Caco-2 (cell line): ENCODE measurements at regions of chr2 and their contacts with region 1.

Region 1: GRCh38 chr2:215920244-215921100 is 92.9 kb downstream of the MREG start:
- DNase-seq: peak; percentile 71 to 83
- H3K4me3 ChIP-seq: no peak overlapping the region
- H3K4me3 Mint-ChIP-seq: no peak overlapping the region
- H3K27ac Mint-ChIP-seq: peak overlapping the region; percentile 45
- H3K4me1 ChIP-seq: peaks cover 23% of the 10 kb centered on the region
- H3K4me1 Mint-ChIP-seq: peaks cover 34% of the 10 kb centered on the region
- H3K27me3 ChIP-seq: no peaks in the 10 kb centered on the region
- H3K27me3 Mint-ChIP-seq: no peaks in the 10 kb centered on the region
- CTCF ChIP-seq: peak; percentile 88 to 91

Region 2: GRCh38 chr2:215418064-215418963 is 502.2 kb before region 1 on chr2:
- CTCF ChIA-PET with region 1: no interaction called
- POLR2A ChIA-PET with region 1: no interaction called
- intact Hi-C with region 1: loop called (anchors 1 kb)
- DNase-seq: no peak
- H3K4me3 ChIP-seq: no peak overlapping the region
- H3K4me3 Mint-ChIP-seq: no peak overlapping the region
- H3K27ac Mint-ChIP-seq: peak overlapping the region; percentile 82
- H3K4me1 ChIP-seq: peaks cover 91% of the 10 kb centered on the region
- H3K4me1 Mint-ChIP-seq: peaks cover 49% of the 10 kb centered on the region
- H3K27me3 ChIP-seq: no peaks in the 10 kb centered on the region
- H3K27me3 Mint-ChIP-seq: no peaks in the 10 kb centered on the region
- CTCF ChIP-seq: no peak

Region 3: GRCh38 chr2:215454519-215455246 is 465.8 kb before region 1 on chr2:
- CTCF ChIA-PET with region 1: no interaction called
- POLR2A ChIA-PET with region 1: no interaction called
- intact Hi-C with region 1: loop called (anchors 1 kb)
- DNase-seq: peak in 1 of 2 experiments; percentile 52
- H3K4me3 ChIP-seq: no peak overlapping the region
- H3K4me3 Mint-ChIP-seq: no peak overlapping the region
- H3K27ac Mint-ChIP-seq: no peak overlapping the region
- H3K4me1 ChIP-seq: peaks cover 9% of the 10 kb centered on the region; the same call in 1 of the 2 replicates
- H3K4me1 Mint-ChIP-seq: peaks cover 7% of the 10 kb centered on the region
- H3K27me3 ChIP-seq: no peaks in the 10 kb centered on the region
- H3K27me3 Mint-ChIP-seq: no peaks in the 10 kb centered on the region
- CTCF ChIP-seq: peak; percentile 65 to 73

Region 4: DNA sequence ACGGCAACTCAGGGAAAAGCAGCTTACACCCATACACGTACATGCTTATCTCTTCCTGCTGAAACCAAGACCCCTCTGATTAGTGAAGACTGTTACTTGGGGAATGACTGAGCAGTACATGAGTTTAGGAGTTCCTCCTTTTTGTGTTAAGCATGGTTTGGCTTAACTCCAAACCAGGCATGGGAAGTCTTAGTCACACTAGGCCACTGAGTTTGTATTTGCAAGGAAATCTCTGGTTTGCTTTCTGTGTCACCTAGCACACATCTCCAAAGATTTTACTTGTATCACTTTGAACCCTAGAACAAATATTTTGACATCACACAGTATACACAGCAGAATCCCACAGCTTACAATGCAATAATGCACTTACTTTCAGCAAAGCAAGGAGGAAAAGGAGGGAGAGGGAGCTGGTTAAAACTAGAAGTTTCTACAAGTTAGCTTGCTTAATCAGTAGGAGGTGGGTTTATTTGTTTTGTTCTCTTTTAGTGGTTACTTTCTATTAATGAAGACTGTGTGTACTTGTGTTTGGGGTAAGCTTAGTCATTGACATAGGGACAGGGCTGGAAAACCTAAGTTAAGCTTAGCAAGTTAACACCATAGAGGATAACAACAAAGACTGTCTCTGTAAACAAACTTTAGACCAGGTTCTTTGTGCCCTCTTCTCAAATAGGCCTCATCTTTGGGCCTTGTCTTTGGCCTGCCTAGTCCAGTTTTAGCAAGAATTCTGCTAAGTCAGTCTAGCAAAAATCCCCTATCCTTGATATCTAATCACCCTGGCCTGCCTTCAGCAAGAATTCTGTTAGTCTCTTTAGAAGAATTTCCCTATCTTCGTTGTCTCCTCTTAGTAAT is 126.5 kb before region 1 on chr2:
- CTCF ChIA-PET with region 1: interaction called, 3 read pairs
- POLR2A ChIA-PET with region 1: no interaction called
- intact Hi-C with region 1: loop called (anchors 1 kb)
- DNase-seq: peak in 1 of 2 experiments; percentile 62
- H3K4me3 ChIP-seq: no peak overlapping the region
- H3K4me3 Mint-ChIP-seq: no peak overlapping the region
- H3K27ac Mint-ChIP-seq: peak overlapping the region; percentile 81
- H3K4me1 ChIP-seq: peaks cover 41% of the 10 kb centered on the region
- H3K4me1 Mint-ChIP-seq: peaks cover 48% of the 10 kb centered on the region
- H3K27me3 ChIP-seq: no peaks in the 10 kb centered on the region
- H3K27me3 Mint-ChIP-seq: no peaks in the 10 kb centered on the region
- CTCF ChIP-seq: no peak

Region 5: DNA sequence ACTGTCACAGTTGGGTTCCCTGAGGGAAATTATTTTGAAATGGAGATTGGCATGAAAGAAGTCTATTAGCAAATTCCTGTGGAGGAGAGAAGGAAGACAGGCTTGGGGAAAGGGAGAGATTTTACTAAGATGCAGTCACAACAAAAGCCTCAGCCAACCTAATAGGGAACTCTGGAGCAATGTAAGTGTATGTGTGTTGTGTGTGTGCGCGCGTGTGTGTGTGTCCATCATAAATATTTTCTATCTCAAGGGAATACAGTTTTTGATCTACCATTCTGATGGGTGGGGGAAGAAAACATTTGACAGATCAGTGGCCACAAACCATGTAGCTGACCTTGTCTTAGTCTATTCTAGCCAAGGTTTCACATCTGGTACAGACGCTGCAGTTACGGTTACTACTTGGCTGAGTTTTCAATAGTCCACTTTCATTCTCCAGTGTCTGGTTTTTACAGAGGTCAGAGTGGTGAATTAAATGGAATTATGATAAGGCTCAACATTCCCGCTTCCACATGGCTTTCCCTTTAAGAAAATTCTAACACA is 20.2 kb after region 1 on chr2:
- CTCF ChIA-PET with region 1: no interaction called
- POLR2A ChIA-PET with region 1: no interaction called
- intact Hi-C with region 1: no loop called
- DNase-seq: no peak
- H3K4me3 ChIP-seq: no peak overlapping the region
- H3K4me3 Mint-ChIP-seq: no peak overlapping the region
- H3K27ac Mint-ChIP-seq: no peak overlapping the region
- H3K4me1 ChIP-seq: no peaks in the 10 kb centered on the region
- H3K4me1 Mint-ChIP-seq: peaks cover 6% of the 10 kb centered on the region
- H3K27me3 ChIP-seq: no peaks in the 10 kb centered on the region
- H3K27me3 Mint-ChIP-seq: no peaks in the 10 kb centered on the region
- CTCF ChIP-seq: no peak